Activated CD4-positive, alpha-beta memory T cell treated with anti-CD3 and anti-CD28 coated beads, Interleukin-2, amount 10 ng/mL, durations not matched to agents 7 days and 5 days (primary cell): ENCODE measurements at regions of chr11 and their contacts with region 1.

Region 1: DNA sequence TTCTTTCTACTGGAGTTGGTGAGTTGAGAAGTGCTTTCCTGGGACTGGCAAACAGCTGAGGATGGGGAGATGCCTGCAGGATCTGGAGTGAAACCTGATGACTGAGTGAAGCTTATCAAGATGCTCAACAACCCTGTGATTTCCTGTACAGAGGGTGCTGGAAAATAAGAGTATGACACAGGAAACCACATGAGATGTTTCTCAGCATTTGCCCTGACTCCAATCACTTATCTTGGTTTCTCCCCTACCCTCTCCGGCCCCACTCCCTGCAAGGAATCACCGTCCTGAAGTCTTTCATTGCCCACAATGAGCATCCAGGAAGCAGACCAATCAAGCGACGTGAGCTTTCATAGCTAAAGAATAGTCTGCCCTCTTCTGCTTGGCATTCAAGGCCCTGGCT is at the start of gene MRGPRX2:
- DNase-seq: no peak
- H3K4me3 Mint-ChIP-seq: no peak within 1 kb of the TSS
- H3K27ac Mint-ChIP-seq: no peak within 1 kb of the TSS
- H3K4me1 Mint-ChIP-seq: peaks cover 21% of the 10 kb centered on the region
- H3K27me3 Mint-ChIP-seq: peaks cover 13% of the 10 kb centered on the region
- total RNA-seq, gene MRGPRX2: not detected

Region 2: DNA sequence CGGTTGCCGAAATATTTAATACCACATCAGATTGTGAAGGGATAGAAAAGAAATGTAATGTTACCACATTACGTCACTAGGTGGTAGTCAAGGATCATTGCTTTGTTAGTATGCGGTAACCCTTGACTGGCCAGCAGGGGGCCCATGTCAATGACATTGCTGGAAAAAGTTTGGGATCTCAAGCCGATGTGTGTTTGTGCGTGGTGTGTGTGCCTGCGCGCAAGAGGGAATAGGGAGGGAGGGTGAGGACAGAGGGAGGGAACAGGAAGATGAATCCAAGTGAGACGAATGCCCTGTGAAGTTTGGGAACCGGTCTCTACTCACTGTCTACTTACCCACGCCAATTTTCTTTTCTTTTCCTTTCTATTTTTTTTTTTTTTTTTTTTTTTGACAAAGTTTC is 10.6 kb after region 1 on chr11:
- CTCF ChIA-PET with region 1: interaction called, 14 read pairs
- POLR2A ChIA-PET with region 1: no interaction called
- DNase-seq: peak; percentile 58
- H3K4me3 Mint-ChIP-seq: no peak overlapping the region
- H3K27ac Mint-ChIP-seq: no peak overlapping the region
- H3K4me1 Mint-ChIP-seq: peaks cover 7% of the 10 kb centered on the region
- H3K27me3 Mint-ChIP-seq: peaks cover 30% of the 10 kb centered on the region

Region 3: DNA sequence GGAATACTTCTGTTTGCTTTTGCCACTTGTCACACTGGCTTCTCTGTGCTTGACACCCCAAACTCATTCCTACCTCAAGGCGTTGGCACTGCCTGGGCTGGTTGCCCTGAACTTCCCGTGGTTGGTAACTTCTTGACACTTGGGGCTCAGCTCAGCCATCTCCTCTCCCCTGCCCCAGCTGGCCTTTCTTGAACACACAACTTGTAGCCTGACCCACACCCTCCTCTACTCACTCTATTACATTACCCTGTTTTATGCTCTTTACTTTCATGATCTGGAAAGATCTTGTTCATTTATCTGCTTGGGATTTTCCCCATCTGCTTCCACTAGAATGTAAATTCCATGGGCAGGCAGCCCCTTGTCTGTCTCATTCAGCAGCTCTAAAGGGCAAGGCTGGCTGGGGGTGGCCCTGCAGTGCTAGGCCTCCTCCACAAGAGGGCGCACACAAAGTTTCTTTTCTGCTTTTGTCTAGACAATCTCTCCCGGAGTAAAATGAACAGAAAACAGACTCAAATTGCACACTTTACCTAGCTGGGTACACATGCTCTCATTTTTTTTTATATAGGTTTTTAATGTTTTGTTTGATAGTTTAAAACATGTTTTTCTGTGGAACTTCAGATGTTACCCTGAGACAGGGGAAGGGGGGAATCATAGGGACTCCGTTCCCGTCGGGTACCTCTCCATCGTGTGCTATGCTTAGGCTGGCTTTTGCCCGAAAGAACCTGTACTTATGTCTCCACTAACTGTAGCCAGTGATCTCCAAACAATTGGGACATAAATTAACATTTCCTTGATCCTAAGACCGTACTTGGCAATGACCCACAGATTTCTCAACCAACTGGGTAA is 16.3 kb after region 1 on chr11:
- CTCF ChIA-PET with region 1: interaction called, 14 read pairs
- POLR2A ChIA-PET with region 1: no interaction called
- DNase-seq: peak; percentile 65
- H3K4me3 Mint-ChIP-seq: no peak overlapping the region
- H3K27ac Mint-ChIP-seq: no peak overlapping the region
- H3K4me1 Mint-ChIP-seq: no peaks in the 10 kb centered on the region
- H3K27me3 Mint-ChIP-seq: peaks cover 14% of the 10 kb centered on the region